Activated T-helper 2 cell treated with anti-CD3 and anti-CD28 coated beads, Interferon-gamma antibody, Interleukin-2, Interleukin-4, amounts not matched to agents 10 μg/mL and 5 μg/mL and 100 μg/mL, durations not matched to agents 14 hours and 24 hours and 36 hours (primary cell): ENCODE measurements at regions of chr6 and their contacts with region 1.

Region 1: GRCh38 chr6:5302995-5303622 is 41.8 kb downstream of the FARS2 start:
- DNase-seq: peak; percentile 44
- H3K4me3 Mint-ChIP-seq: peak overlapping the region; percentile 13
- H3K27ac Mint-ChIP-seq: peak overlapping the region; percentile 81
- H3K4me1 Mint-ChIP-seq: peaks cover 38% of the 10 kb centered on the region
- H3K27me3 Mint-ChIP-seq: no peaks in the 10 kb centered on the region

Region 2: GRCh38 chr6:5143634-5144311 is 159.3 kb before region 1 on chr6:
- intact Hi-C with region 1: loop called (anchors 1 kb)
- DNase-seq: peak; percentile 62
- H3K4me3 Mint-ChIP-seq: no peak overlapping the region
- H3K27ac Mint-ChIP-seq: no peak overlapping the region
- H3K4me1 Mint-ChIP-seq: peaks cover 3% of the 10 kb centered on the region
- H3K27me3 Mint-ChIP-seq: no peaks in the 10 kb centered on the region

Region 3: DNA sequence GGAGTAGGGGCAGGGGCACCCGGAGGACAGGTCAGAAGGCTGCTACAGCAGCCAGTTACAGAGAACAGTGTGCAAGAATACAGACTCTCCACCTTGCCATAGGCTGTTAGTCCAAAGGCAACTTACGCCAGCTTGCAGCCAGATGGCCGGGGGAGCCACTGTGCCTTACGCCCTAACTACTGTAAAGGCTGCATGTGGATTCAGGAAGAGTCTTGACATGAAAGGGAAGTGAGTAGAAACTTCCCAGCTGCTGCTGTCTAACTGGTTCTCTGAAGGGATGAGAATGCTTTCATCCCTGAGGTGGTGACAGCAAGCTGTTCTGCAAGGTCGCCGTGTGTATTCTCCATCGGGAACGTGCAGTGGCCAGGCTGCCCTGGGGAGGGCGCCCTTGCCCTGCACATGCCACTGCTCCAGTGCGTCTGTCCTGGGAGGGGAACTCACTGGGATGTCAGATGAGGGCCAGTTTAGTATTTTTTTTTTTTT is 88.5 kb before region 1 on chr6:
- intact Hi-C with region 1: loop called (anchors 1 kb)
- DNase-seq: no peak
- H3K4me3 Mint-ChIP-seq: no peak overlapping the region
- H3K27ac Mint-ChIP-seq: no peak overlapping the region
- H3K4me1 Mint-ChIP-seq: peaks cover 14% of the 10 kb centered on the region
- H3K27me3 Mint-ChIP-seq: no peaks in the 10 kb centered on the region

Region 4: DNA sequence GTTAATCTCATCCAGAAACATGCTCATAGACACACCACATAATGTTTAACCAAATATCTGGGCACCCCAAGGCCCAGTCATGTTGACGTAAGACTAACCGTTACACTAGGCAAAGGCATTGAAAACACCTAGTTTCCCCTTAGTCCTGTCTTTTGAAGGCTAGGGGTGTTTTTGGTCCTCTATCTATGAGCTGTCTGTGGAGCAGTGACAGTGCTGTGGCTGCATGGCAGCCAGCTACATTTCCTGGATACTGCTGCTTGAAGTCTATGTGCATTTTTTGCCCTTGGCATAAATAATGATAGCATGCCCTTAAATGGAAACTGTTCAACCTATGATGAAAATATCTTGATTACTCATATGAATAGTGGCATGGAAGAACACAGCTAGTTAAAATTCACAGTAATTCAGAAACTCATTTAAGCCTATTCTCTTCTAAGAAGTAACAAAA is 23.2 kb before region 1 on chr6:
- intact Hi-C with region 1: loop called (anchors 1 kb)
- DNase-seq: peak; percentile 22
- H3K4me3 Mint-ChIP-seq: no peak overlapping the region
- H3K27ac Mint-ChIP-seq: peak overlapping the region; percentile 85
- H3K4me1 Mint-ChIP-seq: peaks cover 53% of the 10 kb centered on the region
- H3K27me3 Mint-ChIP-seq: no peaks in the 10 kb centered on the region

Region 5: GRCh38 chr6:5398530-5398929 is 95.4 kb after region 1 on chr6:
- intact Hi-C with region 1: loop called (anchors 2 kb)
- DNase-seq: no peak
- H3K4me3 Mint-ChIP-seq: no peak overlapping the region
- H3K27ac Mint-ChIP-seq: no peak overlapping the region
- H3K4me1 Mint-ChIP-seq: peaks cover 9% of the 10 kb centered on the region
- H3K27me3 Mint-ChIP-seq: no peaks in the 10 kb centered on the region